ENCODE measurements at regions of chr3 and their contacts with region 1.

Region 1: DNA sequence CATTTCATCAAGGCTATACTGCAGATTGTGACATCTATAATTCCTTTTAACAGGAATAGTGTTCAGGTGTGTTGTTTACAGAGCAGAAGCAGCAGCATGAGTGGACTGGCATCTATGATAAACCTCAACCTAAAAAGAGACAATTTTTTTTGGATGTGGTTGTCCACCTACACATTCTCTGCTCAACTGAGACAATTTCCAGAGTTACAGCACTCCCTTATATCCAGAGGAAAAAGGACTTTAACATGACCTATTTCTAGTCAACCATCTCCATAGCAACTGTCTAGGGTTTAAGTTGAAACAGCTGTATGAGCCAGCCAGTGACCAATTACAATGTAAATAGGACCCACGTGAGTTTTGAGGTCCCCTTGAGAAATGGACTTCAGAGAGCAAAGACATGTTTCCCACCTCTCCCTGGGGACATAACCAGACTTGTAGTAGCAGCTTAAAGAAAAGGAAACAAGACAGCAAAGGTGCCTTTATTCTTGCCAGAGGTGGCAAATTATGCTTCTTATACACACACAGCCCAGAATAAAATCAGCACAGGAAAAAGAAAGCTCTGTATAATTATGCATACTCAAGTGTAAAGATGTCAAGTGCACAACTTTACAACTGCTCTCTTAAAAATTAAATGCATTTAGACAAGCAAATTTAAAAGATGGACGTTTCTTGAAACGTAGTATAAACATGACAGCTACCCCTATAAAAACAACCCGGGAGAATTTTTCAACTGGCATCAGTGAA is 40.3 kb downstream of the SUMF1 start:
- DNase-seq: peak; percentile 5 to 56 (median 49)
- H3K4me3 ChIP-seq: no peak overlapping the region
- H3K4me3 Mint-ChIP-seq: no peak overlapping the region
- H3K27ac ChIP-seq: peak overlapping the region in 1 of 2 donors; percentile 53
- H3K27ac Mint-ChIP-seq: peak overlapping the region in 4 of 7 donors; percentile 41 to 82 (median 62)
- H3K4me1 ChIP-seq: no peaks in the 10 kb centered on the region
- H3K4me1 Mint-ChIP-seq: peaks cover 11% of the 10 kb centered on the region
- H3K27me3 ChIP-seq: no peaks in the 10 kb centered on the region
- H3K27me3 Mint-ChIP-seq: no peaks in the 10 kb centered on the region
- CTCF ChIP-seq: no peak

Region 2: DNA sequence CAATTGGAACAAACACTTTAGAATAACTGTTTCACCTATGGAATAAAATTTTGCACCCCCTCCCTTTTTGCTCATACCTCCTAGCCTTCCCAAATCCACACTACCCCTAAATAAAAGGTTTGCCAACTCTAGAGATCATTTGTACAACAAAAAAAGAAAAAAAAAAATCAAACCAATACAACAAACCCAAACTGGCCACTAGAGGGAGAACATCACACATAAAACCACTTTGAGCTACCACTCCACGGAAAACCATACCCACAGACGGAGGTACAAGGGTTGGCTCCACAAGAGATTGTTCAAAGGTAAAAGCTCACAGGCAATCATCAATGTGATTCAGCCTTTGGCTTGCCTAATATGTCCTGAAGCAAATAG is 76.0 kb before region 1 on chr3:
- intact Hi-C with region 1: loop called in 1 of 2 experiments (anchors 10 kb)
- DNase-seq: peak; percentile 51 to 66 (median 65)
- H3K4me3 ChIP-seq: peak overlapping the region; percentile 55 to 99 (median 76)
- H3K4me3 Mint-ChIP-seq: peak overlapping the region; percentile 65 to 77
- H3K27ac ChIP-seq: peak overlapping the region in 1 of 2 donors; percentile 79
- H3K27ac Mint-ChIP-seq: peak overlapping the region in 4 of 7 donors; percentile 31 to 70 (median 64)
- H3K4me1 ChIP-seq: peaks cover 8% of the 10 kb centered on the region in 2 donors
- H3K4me1 Mint-ChIP-seq: peaks cover 24% of the 10 kb centered on the region
- H3K27me3 ChIP-seq: no peaks in the 10 kb centered on the region
- H3K27me3 Mint-ChIP-seq: peaks cover 0 to 2% (median 0%) of the 10 kb centered on the region in 3 donors
- CTCF ChIP-seq: peak; percentile 87

Region 3: GRCh38 chr3:4474683-4475490 is 48.1 kb after region 1 on chr3:
- intact Hi-C with region 1: loop called in 1 of 2 experiments (anchors 10 kb)
- DNase-seq: peak; percentile 90 to 97 (median 95)
- H3K4me3 ChIP-seq: peak overlapping the region; percentile 28 to 59 (median 39)
- H3K4me3 Mint-ChIP-seq: peak overlapping the region; percentile 64 to 80
- H3K27ac ChIP-seq: peak overlapping the region; percentile 80 to 88
- H3K27ac Mint-ChIP-seq: peak overlapping the region; percentile 91 to 99 (median 93)
- H3K4me1 ChIP-seq: peaks cover 54 to 58% of the 10 kb centered on the region in 2 donors
- H3K4me1 Mint-ChIP-seq: peaks cover 60% of the 10 kb centered on the region
- H3K27me3 ChIP-seq: no peaks in the 10 kb centered on the region
- H3K27me3 Mint-ChIP-seq: peaks cover 0 to 3% (median 0%) of the 10 kb centered on the region in 3 donors
- CTCF ChIP-seq: no peak

Measured in CD14-positive monocyte (primary cell).